ENCODE measurements at regions of chr17 and their contacts with region 1.

Region 1: GRCh38 chr17:74961657-74962490 is 10.7 kb downstream of the HID1 start:
- DNase-seq: peak; percentile 91
- ATAC-seq: peak; percentile 79
- H3K4me3 Mint-ChIP-seq: no peak overlapping the region
- H3K27ac Mint-ChIP-seq: no peak overlapping the region
- H3K4me1 Mint-ChIP-seq: peaks cover 3% of the 10 kb centered on the region
- H3K27me3 Mint-ChIP-seq: no peaks in the 10 kb centered on the region
- CTCF ChIP-seq: peak; percentile 79

Region 2: DNA sequence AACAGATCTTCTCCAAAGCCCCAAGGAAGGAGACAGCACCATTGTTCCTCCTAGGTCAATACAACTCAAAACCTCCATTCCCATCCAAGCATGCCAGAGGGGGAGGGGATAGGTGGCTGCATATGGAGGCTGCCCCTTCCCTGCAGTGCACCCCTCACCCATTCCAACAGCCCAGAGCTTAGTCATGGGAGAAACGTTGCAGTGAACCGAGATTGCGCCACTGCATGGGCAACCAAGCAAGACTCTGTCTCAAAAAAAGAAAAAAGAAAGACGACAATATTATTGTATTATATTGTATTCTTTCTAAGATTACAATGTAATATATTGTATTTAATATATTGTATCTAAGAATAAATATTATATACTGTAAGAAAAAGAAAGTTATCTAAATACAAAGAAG is 302.0 kb before region 1 on chr17:
- CTCF ChIA-PET with region 1: interaction called, 12 read pairs
- POLR2A ChIA-PET with region 1: no interaction called
- intact Hi-C with region 1: no loop called
- DNase-seq: no peak
- ATAC-seq: no peak
- H3K4me3 Mint-ChIP-seq: no peak overlapping the region
- H3K27ac Mint-ChIP-seq: no peak overlapping the region
- H3K4me1 Mint-ChIP-seq: peaks cover 3% of the 10 kb centered on the region
- H3K27me3 Mint-ChIP-seq: peaks cover 17% of the 10 kb centered on the region
- CTCF ChIP-seq: no peak

Region 3: DNA sequence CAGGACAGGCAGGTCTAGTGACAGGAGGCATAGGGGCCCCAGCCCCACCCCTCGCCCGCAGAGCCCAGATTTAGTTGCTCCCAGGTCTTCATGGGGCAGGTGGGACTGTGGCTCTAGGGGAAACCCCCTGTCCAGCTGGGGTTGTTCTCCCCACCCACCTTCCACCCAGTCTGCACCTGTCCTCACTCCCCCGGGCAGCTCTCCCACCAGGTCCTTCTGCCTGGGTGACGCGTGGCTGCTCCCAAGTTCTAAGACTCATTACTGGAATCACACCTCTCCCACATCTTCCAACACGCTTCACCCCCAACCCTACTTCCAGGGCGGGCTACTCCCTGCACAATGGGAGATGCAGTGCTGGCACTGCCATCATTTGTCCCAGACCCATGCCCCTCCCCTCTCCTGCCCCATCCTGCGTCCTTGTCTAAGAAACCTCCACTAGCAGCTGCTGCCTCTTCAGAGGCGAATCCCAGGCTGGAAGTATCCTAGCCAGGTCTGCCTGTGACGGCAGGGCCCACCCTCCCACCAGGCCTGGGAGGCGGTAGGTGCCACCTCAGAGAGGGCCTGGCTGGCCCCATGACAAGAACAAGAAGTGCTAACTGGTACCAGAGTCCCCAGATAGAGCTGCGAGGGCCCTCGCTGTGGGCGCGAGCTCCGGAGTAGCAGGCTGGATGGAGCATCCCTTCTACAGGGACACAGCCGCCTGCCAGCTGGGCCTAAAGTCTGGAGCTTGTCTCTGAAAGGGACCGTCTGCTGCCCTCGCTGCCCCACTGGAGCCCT is 125.0 kb before region 1 on chr17:
- CTCF ChIA-PET with region 1: no interaction called
- POLR2A ChIA-PET with region 1: no interaction called
- intact Hi-C with region 1: no loop called
- DNase-seq: no peak
- ATAC-seq: no peak
- H3K4me3 Mint-ChIP-seq: no peak overlapping the region
- H3K27ac Mint-ChIP-seq: no peak overlapping the region
- H3K4me1 Mint-ChIP-seq: peaks cover 19% of the 10 kb centered on the region
- H3K27me3 Mint-ChIP-seq: peaks cover 7% of the 10 kb centered on the region
- CTCF ChIP-seq: no peak

Region 4: DNA sequence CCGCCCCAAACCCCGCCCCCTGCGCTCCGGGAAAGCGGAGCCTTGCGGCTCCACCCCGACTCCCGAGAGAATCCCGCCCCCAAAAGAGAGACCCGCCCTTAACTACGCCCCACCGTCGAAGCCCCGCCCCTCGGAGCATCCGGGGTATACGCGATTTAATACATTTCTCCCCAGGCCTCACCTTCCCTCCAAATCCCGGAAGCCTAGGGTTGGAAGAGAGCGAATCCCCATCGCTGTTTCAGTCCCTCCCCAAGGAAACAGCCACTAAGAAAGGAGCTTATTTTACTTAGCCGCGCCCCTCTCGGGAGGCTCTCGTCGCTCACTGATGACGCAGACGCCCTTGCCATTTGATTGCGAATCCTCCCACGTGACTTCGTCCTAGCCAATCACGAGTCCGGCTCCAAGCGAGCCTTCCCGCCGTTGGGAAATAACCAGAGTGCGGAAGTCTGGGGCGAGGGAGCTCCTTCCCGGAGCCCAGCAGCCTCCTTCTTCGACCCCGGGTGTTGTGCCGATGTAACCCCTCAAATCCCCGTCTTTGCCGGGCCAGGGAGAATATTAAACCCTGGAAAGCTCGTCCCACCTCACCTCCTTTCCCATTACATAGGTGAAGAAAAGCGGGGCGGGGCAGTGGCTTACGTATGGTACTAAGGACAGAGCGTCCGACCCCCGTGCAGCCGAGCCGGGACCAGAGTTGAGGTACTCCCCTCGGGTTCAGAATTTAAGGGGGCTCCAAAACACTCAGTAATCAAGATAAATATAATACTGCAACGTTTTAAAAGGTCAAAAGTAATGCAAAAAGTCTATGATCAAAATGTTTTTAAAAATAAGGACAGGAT is 88.6 kb before region 1 on chr17:
- CTCF ChIA-PET with region 1: interaction called, 10 read pairs
- POLR2A ChIA-PET with region 1: no interaction called
- intact Hi-C with region 1: no loop called
- DNase-seq: peak; percentile 100
- ATAC-seq: peak; percentile 95
- H3K4me3 Mint-ChIP-seq: peak overlapping the region; percentile 75
- H3K27ac Mint-ChIP-seq: peak overlapping the region; percentile 94
- H3K4me1 Mint-ChIP-seq: peaks cover 15% of the 10 kb centered on the region
- H3K27me3 Mint-ChIP-seq: no peaks in the 10 kb centered on the region
- CTCF ChIP-seq: no peak

Region 5: DNA sequence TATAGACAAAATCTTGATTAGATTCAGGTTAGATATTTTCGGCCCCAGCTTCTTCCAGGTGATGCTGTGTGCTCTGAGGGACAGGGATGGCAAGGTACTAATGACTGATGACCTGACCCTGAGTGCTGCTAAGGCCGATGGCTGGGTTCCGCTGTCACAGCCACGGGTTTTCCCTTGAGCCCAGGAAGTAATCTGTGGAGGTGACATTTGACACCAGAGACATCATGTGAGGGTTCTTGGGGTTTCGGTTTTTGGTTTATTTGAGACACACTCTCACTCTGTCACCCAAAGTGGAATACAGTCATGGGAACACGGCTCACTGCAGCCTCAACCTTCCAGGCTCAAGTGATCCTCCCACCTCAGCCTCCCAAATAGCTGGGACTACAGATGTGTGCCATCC is 16.3 kb before region 1 on chr17:
- CTCF ChIA-PET with region 1: interaction called, 14 read pairs
- POLR2A ChIA-PET with region 1: interaction called, 3 read pairs
- intact Hi-C with region 1: no loop called
- DNase-seq: no peak
- ATAC-seq: no peak
- H3K4me3 Mint-ChIP-seq: no peak overlapping the region
- H3K27ac Mint-ChIP-seq: no peak overlapping the region
- H3K4me1 Mint-ChIP-seq: no peaks in the 10 kb centered on the region
- H3K27me3 Mint-ChIP-seq: peaks cover 4% of the 10 kb centered on the region
- CTCF ChIP-seq: no peak

Region 6: GRCh38 chr17:74987418-74987908 is 25.6 kb after region 1 on chr17 and contains the start of gene CDR2L:
- CTCF ChIA-PET with region 1: interaction called, 26 read pairs
- POLR2A ChIA-PET with region 1: no interaction called
- intact Hi-C with region 1: no loop called
- DNase-seq: peak; percentile 94
- ATAC-seq: peak; percentile 99
- H3K4me3 Mint-ChIP-seq: peak within 1 kb of the TSS; percentile 80
- H3K27ac Mint-ChIP-seq: no peak within 1 kb of the TSS
- H3K4me1 Mint-ChIP-seq: peaks cover 8% of the 10 kb centered on the region
- H3K27me3 Mint-ChIP-seq: peaks cover 19% of the 10 kb centered on the region
- CTCF ChIP-seq: peak; percentile 9
- total RNA-seq, gene CDR2L: 0.59 to 0.94 TPM

Region 7: GRCh38 chr17:75034236-75034908 is 72.5 kb after region 1 on chr17:
- CTCF ChIA-PET with region 1: interaction called, 21 read pairs
- POLR2A ChIA-PET with region 1: no interaction called
- intact Hi-C with region 1: no loop called
- DNase-seq: peak; percentile 97
- ATAC-seq: peak; percentile 66
- H3K4me3 Mint-ChIP-seq: peak overlapping the region; percentile 96
- H3K27ac Mint-ChIP-seq: peak overlapping the region; percentile 97
- H3K4me1 Mint-ChIP-seq: peaks cover 42% of the 10 kb centered on the region
- H3K27me3 Mint-ChIP-seq: peaks cover 3% of the 10 kb centered on the region
- CTCF ChIP-seq: no peak

Region 8: DNA sequence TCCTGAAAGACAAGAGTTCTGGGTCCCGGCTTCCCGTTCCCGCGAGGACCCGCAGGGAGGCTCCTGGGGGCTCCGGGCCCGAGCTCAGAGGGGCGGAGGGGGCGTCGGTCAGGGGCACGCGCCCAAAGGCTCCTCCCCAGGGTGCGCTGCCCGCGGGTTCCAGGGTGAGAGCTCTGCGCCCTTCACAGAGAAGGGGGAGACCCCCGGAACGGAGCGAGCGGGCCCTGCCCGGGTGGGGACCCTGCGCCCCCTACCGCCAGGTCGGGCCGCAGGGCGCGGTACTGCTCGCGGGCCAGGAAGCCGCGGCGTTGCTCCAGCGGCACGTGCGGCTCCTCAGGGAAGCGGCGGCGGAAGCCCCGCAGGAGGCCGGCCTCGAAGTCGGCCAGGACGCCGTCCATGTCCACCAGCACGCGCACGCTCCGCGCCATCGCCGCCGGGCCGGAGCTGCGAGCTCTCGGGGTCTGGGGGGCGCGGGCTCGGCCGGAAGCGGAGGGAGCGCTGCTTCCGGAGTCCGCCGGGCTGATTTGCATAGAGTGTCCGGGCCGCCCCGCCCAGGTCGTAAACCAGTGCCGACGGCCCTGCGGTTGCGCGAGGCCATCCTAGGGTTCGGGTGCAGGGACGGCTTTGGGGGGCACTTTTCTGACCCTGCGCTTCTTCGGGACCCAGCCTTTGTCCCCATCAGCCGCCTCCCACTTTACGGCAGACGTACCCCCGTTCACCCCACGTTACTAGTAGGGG is 169.6 kb after region 1 on chr17 and contains the start of gene NT5C:
- CTCF ChIA-PET with region 1: interaction called, 14 read pairs
- POLR2A ChIA-PET with region 1: interaction called, 6 read pairs
- intact Hi-C with region 1: no loop called
- DNase-seq: peak; percentile 86
- ATAC-seq: peak; percentile 83
- H3K4me3 Mint-ChIP-seq: peak within 1 kb of the TSS; percentile 86
- H3K27ac Mint-ChIP-seq: peak within 1 kb of the TSS; percentile 93
- H3K4me1 Mint-ChIP-seq: peaks cover 12% of the 10 kb centered on the region
- H3K27me3 Mint-ChIP-seq: no peaks in the 10 kb centered on the region
- CTCF ChIP-seq: peak; percentile 51
- total RNA-seq, gene NT5C: 66.1 to 68.1 TPM

Measured in activated CD8-positive, alpha-beta T cell treated with anti-CD3 and anti-CD28 coated beads for 36 hours (primary cell).